Endothelial cell of umbilical vein (primary cell): ENCODE measurements at regions of chr1 and their contacts with region 1.

Region 1: DNA sequence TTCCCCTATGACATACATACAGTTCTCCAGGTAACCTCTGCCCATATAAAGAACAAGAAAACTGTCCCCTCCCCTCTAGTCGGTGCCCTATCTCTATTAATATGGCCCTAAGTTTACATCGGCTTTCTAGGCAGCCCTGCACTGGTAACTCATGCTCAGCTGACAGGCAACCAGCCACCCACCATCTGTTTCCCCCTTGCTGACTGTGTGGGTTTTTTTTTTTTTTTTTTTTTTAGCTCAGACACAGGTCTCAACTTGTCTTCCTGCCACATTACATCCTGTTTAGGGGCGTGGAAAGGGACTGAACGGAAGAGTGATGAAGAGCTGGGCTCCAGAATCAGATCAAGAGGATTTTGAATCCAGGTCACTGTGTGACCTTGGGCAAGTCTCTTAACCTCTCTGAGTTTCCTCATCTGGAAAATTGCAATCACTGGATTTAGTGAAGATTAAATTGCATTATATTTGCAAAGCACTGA is 14.0 kb downstream of the LAPTM5 start:
- DNase-seq: peak; percentile 17
- H3K4me3 ChIP-seq: no peak overlapping the region
- H3K27ac ChIP-seq: no peak overlapping the region
- H3K4me1 ChIP-seq: peaks cover 16% of the 10 kb centered on the region
- H3K27me3 ChIP-seq: no peaks in the 10 kb centered on the region
- CTCF ChIP-seq: no peak
- POLR2A ChIP-seq: no peak

Region 2: DNA sequence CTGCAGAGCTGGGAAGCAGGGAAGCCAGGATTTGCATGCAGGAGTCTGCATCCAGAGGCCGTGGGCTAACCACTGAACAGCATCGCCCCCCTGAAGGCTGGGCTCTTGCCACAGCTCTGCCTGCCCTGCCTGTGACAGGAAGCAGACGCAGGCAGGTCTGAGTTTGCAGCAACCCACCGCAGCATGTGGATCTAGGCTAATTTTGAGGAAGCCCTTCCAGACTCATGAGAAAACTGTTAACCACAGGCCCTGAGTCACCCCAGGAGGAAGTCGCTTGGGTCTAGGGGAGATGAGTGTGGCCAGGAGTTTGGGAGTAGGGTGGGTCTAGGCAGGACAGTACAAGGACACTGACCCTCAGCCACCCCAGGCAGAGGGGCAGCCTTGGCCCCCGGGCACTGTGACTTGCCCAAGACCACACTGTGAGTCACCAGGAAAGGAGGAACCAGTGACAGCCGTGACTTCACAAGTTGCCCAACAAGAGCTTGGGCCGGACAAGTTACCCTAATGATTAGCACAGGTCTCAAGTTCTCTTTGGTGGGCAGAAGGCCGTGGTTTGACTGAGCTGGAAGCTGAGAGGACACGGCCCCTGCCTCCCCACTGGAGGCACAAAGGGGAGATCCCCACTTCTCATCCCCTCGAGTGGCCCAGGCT is 13.0 kb after region 1 on chr1:
- CTCF ChIA-PET with region 1: interaction called, 12 read pairs
- POLR2A ChIA-PET with region 1: no interaction called
- dilution Hi-C with region 1: no loop called
- intact Hi-C with region 1: loop called (anchors 1 kb)
- DNase-seq: peak; percentile 49
- H3K4me3 ChIP-seq: peak overlapping the region; percentile 27 to 77 (median 51)
- H3K27ac ChIP-seq: peak overlapping the region; percentile 95
- H3K4me1 ChIP-seq: peaks cover 31% of the 10 kb centered on the region
- H3K27me3 ChIP-seq: no peaks in the 10 kb centered on the region
- CTCF ChIP-seq: no peak
- POLR2A ChIP-seq: no peak

Region 3: DNA sequence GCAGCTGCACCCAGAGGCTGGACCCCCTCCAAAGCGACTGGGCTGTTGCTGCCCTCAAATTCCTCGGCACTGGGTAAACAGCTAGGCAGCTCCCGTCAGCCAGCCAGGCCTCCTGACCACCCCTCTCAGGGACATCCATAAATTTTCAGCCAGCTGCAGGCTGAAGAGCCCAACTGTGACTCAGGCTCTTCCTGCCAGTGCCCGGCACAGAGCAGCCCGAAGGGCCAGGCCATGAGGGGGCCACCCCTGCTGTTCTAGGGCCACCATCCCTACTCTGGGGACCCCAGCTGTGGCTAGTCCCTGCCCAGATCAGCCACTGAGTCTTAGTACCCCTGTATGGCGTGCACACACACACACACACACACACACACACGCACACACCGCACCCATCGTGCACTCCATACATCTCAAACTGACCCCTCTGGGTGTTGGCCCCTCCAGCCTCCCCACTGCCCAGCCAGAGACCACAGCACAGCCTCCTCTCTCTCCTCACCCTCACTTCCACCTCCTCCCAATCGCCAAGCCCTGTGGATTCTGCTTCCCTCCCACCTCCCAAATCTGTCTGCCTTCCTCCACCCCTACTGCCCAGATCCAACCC is 20.1 kb after region 1 on chr1:
- CTCF ChIA-PET with region 1: interaction called, 12 read pairs
- POLR2A ChIA-PET with region 1: no interaction called
- dilution Hi-C with region 1: no loop called
- intact Hi-C with region 1: loop called (anchors 1 kb)
- DNase-seq: peak; percentile 28
- H3K4me3 ChIP-seq: no peak overlapping the region
- H3K27ac ChIP-seq: no peak overlapping the region
- H3K4me1 ChIP-seq: no peaks in the 10 kb centered on the region
- H3K27me3 ChIP-seq: no peaks in the 10 kb centered on the region
- CTCF ChIP-seq: no peak
- POLR2A ChIP-seq: no peak